BJ (cell line): ENCODE measurements at regions of chr11 and their contacts with region 1.

Region 1: GRCh38 chr11:19398772-19399527 is 158.2 kb upstream of the E2F8 start:
- DNase-seq: peak; percentile 74
- H3K4me3 ChIP-seq: no peak overlapping the region
- H3K27me3 ChIP-seq: peaks cover 2% of the 10 kb centered on the region
- CTCF ChIP-seq: no peak

Region 2: DNA sequence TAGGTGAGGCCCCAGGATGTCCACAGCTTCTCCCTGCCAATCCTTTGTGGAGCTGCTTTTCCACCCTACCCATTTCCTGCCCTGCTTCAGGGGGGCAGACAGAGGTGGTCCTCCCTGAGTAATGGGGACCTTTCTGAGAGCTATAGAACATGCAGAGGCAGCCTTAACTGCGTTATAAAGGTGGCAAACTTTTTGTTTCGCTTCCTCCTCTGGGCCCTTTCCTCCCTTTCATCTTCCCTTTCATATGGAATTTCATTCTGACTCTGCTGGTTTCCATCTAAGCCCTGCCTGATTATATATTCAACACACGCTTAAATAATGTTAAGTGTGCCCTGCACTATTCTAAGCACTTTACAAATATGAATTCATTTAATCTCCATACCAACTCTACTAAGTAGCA is 11.1 kb after region 1 on chr11:
- CTCF ChIA-PET with region 1: interaction called, 14 read pairs
- POLR2A ChIA-PET with region 1: no interaction called
- DNase-seq: no peak
- H3K4me3 ChIP-seq: no peak overlapping the region
- H3K27me3 ChIP-seq: peaks cover 11% of the 10 kb centered on the region
- CTCF ChIP-seq: no peak